GM13976 (cell line): ENCODE measurements at regions of chr6 and their contacts with region 1.

Region 1: DNA sequence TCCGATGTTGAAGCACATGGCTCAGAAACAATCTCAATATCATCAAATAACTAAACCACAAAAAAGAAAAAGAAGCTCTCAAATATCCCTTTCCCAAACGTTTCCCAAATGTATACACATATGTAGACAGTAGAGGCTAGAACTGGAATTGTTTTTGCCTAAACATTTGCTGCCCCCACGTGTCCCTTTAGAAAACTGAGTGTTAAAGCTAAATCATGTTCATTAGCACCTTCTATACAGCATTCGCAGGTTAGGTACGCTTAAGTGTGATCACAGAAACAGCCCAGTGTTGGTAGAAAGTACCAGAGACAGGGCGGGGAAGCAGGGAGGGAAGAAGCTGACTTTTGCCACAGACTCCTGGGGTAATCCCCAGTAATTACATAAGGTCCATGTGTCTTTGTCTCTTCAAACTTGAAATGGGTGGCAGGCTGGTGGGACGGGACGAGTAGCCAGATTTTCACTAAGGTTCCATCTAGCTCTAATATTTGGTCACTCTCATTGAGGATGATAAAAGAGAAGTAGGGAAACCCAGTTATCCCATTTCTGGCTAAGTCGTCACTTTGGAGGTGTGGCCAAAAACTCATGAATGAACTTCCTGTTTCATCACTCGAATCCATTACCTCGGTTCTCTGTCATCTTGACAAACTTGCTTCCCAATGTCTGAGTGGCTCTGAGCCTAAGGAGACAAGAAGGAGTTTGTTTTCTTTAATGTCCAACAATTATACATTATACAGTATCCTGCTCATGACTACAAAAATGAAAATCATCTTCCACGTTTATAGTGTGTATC is 15.0 kb upstream of the TFAP2A start:
- DNase-seq: peak; percentile 59
- CTCF ChIP-seq: peak; percentile 39

Region 2: DNA sequence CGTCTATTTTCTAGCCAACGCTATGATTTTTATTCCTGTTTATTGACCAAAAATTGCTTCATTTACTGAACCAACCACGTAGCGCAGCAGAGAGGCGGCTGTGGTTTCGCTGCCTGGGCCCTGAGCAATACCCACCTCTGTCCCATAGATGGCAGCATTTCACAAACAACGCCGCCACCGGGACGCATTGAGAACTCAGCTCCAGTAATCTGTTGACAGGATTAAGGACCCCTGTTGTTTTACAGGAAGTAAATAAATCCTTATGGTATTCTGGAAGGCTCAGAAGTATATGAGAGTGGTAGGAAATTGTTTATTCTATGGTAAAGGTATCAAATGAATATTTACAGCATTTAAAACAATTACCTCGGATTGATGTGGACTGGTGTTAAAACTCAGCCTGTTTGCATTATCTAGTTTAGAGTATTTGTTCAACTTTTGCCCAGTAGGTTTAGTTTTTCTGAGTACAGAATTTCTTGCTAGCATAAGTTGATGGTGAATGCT is 1446.6 kb before region 1 on chr6:
- in situ Hi-C with region 1: loop called (anchors 25 kb)
- DNase-seq: peak; percentile 49
- CTCF ChIP-seq: peak; percentile 96

Region 3: GRCh38 chr6:10030942-10031537 is 398.8 kb before region 1 on chr6:
- in situ Hi-C with region 1: loop called (anchors 10 kb)
- DNase-seq: peak; percentile 22
- CTCF ChIP-seq: peak; percentile 17

Region 4: GRCh38 chr6:11744753-11745152 is 1314.9 kb after region 1 on chr6:
- in situ Hi-C with region 1: no loop called
- DNase-seq: no peak
- CTCF ChIP-seq: no peak